ENCODE measurements at regions of chr19 and their contacts with region 1.

Region 1: GRCh38 chr19:48842789-48843162 is 6.5 kb upstream of the HSD17B14 start:
- DNase-seq: peak; percentile 47
- H3K4me3 Mint-ChIP-seq: no peak overlapping the region
- H3K27ac Mint-ChIP-seq: no peak overlapping the region
- H3K4me1 Mint-ChIP-seq: no peaks in the 10 kb centered on the region
- H3K27me3 Mint-ChIP-seq: no peaks in the 10 kb centered on the region

Region 2: GRCh38 chr19:48674921-48675824 is 167.6 kb before region 1 on chr19:
- CTCF ChIA-PET with region 1: interaction called, 13 read pairs
- POLR2A ChIA-PET with region 1: no interaction called
- intact Hi-C with region 1: no loop called
- DNase-seq: peak; percentile 82
- H3K4me3 Mint-ChIP-seq: no peak overlapping the region
- H3K27ac Mint-ChIP-seq: no peak overlapping the region
- H3K4me1 Mint-ChIP-seq: peaks cover 6% of the 10 kb centered on the region
- H3K27me3 Mint-ChIP-seq: no peaks in the 10 kb centered on the region

Region 3: DNA sequence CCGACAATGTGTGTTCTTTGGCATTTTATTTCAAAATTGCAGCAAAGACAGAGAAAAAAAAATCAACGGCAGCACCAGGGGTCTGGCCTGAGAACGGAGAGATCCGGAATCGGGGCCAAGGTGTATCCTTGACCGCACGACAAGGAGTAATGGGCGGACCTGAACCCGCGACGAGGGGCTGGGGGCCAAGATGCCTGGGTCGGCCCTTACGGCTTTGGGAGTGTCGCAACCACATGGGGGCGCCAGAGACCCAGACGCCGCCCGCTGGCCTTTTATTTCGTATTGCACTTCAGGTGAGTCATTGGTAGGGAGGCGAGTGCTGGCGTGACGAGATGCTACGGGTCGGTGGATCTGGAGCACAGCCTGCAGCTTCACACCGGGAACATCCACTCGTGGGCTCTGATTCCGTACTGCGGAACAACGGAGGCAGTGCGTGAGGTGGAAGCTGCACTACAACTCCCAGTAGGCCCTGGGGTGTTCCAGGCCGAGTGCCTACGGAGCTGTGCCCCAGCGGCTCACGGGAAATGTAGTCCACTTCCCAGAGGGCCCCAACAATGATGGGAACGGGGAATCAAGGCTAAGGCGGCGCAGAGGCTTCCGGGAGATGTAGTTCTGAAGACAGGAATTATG is 47.6 kb before region 1 on chr19:
- CTCF ChIA-PET with region 1: interaction called, 149 read pairs
- POLR2A ChIA-PET with region 1: interaction called, 4 read pairs
- intact Hi-C with region 1: no loop called
- DNase-seq: peak; percentile 89
- H3K4me3 Mint-ChIP-seq: peak overlapping the region; percentile 89
- H3K27ac Mint-ChIP-seq: peak overlapping the region; percentile 84
- H3K4me1 Mint-ChIP-seq: peaks cover 7% of the 10 kb centered on the region
- H3K27me3 Mint-ChIP-seq: no peaks in the 10 kb centered on the region

Region 4: GRCh38 chr19:48853483-48853882 is 10.7 kb after region 1 on chr19:
- CTCF ChIA-PET with region 1: interaction called, 26 read pairs
- POLR2A ChIA-PET with region 1: interaction called, 5 read pairs
- intact Hi-C with region 1: no loop called
- DNase-seq: no peak
- H3K4me3 Mint-ChIP-seq: no peak overlapping the region
- H3K27ac Mint-ChIP-seq: no peak overlapping the region
- H3K4me1 Mint-ChIP-seq: no peaks in the 10 kb centered on the region
- H3K27me3 Mint-ChIP-seq: no peaks in the 10 kb centered on the region

Region 5: GRCh38 chr19:48970923-48971395 is 128.2 kb after region 1 on chr19:
- CTCF ChIA-PET with region 1: interaction called, 28 read pairs
- POLR2A ChIA-PET with region 1: no interaction called
- intact Hi-C with region 1: loop called (anchors 2 kb)
- DNase-seq: peak; percentile 87
- H3K4me3 Mint-ChIP-seq: no peak overlapping the region
- H3K27ac Mint-ChIP-seq: no peak overlapping the region
- H3K4me1 Mint-ChIP-seq: peaks cover 21% of the 10 kb centered on the region
- H3K27me3 Mint-ChIP-seq: no peaks in the 10 kb centered on the region